ENCODE measurements at regions of chr3 and their contacts with region 1.

Region 1: GRCh38 chr3:112013058-112013783 is 14.5 kb downstream of the TAGLN3 start:
- DNase-seq: peak; percentile 74
- ATAC-seq: peak; percentile 92
- H3K4me3 ChIP-seq: no peak overlapping the region
- H3K27ac ChIP-seq: peak overlapping the region; percentile 1; the same call in 1 of the 2 replicates
- H3K4me1 ChIP-seq: peaks cover 0 to 14% of the 10 kb centered on the region in 2 experiments; a peak in 2 of 4 replicates
- H3K27me3 ChIP-seq: no peaks in the 10 kb centered on the region
- CTCF ChIP-seq: peak; percentile 79 to 90 (median 89)
- POLR2A ChIP-seq: no peak
- RAD21 ChIP-seq: peak; percentile 93

Region 2: DNA sequence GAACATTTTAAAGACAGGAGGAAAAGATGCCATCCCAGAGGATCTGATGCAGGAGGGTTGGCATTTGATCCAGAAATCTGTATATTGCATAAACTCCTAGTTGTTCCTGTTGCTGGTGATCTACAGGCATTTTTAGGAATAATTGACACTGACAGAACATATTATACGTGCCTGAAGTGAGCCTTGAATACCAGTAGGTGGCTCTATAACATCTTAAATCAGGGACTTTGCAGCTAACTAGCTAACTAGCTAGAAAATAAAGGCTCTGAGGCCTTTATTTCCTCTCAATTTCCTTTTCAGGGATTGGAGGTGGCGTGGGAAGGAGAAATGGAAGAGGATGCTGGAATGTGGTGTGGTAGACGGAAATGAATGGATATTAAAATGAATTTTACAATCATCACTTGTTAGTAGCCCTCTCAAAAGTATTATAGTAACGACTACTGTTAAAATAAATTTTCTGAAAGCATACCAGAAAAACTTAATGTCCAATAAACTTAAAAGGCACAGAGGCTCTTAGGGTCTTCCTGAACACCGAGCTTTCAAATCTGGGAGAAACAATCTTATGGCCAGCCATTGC is 344.2 kb before region 1 on chr3:
- CTCF ChIA-PET with region 1: interaction called, 10 read pairs
- POLR2A ChIA-PET with region 1: no interaction called
- RAD21 ChIA-PET with region 1: interaction called in 1 of 2 experiments, 5 read pairs
- intact Hi-C with region 1: no loop called
- DNase-seq: peak; percentile 47
- ATAC-seq: peak; percentile 88
- H3K4me3 ChIP-seq: no peak overlapping the region
- H3K27ac ChIP-seq: no peak overlapping the region
- H3K4me1 ChIP-seq: peaks cover 14 to 46% of the 10 kb centered on the region in 2 experiments; a peak in 3 of 4 replicates
- H3K27me3 ChIP-seq: no peaks in the 10 kb centered on the region
- CTCF ChIP-seq: peak; percentile 57 to 89 (median 81)
- POLR2A ChIP-seq: no peak
- RAD21 ChIP-seq: peak; percentile 92

Region 3: GRCh38 chr3:111751961-111752360 is 261.3 kb before region 1 on chr3:
- CTCF ChIA-PET with region 1: no interaction called
- POLR2A ChIA-PET with region 1: no interaction called
- RAD21 ChIA-PET with region 1: no interaction called
- intact Hi-C with region 1: no loop called
- DNase-seq: no peak
- ATAC-seq: no peak
- H3K4me3 ChIP-seq: no peak overlapping the region
- H3K27ac ChIP-seq: no peak overlapping the region
- H3K4me1 ChIP-seq: peaks cover 10 to 36% of the 10 kb centered on the region in 2 experiments
- H3K27me3 ChIP-seq: no peaks in the 10 kb centered on the region
- CTCF ChIP-seq: no peak
- POLR2A ChIP-seq: no peak
- RAD21 ChIP-seq: no peak

Region 4: GRCh38 chr3:111781561-111782446 is 231.4 kb before region 1 on chr3:
- CTCF ChIA-PET with region 1: no interaction called
- POLR2A ChIA-PET with region 1: no interaction called
- RAD21 ChIA-PET with region 1: no interaction called
- intact Hi-C with region 1: no loop called
- DNase-seq: no peak
- ATAC-seq: no peak
- H3K4me3 ChIP-seq: no peak overlapping the region
- H3K27ac ChIP-seq: no peak overlapping the region
- H3K4me1 ChIP-seq: no peaks in the 10 kb centered on the region
- H3K27me3 ChIP-seq: no peaks in the 10 kb centered on the region
- CTCF ChIP-seq: no peak
- POLR2A ChIP-seq: no peak
- RAD21 ChIP-seq: no peak

Region 5: GRCh38 chr3:111895079-111895478 is 118.1 kb before region 1 on chr3:
- CTCF ChIA-PET with region 1: interaction called, 30 read pairs
- POLR2A ChIA-PET with region 1: no interaction called
- RAD21 ChIA-PET with region 1: interaction called, 9 to 10 read pairs
- intact Hi-C with region 1: no loop called
- DNase-seq: peak; percentile 75
- ATAC-seq: peak; percentile 82
- H3K4me3 ChIP-seq: no peak overlapping the region
- H3K27ac ChIP-seq: peak overlapping the region; percentile 58
- H3K4me1 ChIP-seq: peaks cover 23 to 73% of the 10 kb centered on the region in 2 experiments; a peak in 3 of 4 replicates
- H3K27me3 ChIP-seq: no peaks in the 10 kb centered on the region
- CTCF ChIP-seq: peak in 2 of 3 experiments; percentile 64 to 81; a peak in 4 of 6 replicates
- POLR2A ChIP-seq: no peak
- RAD21 ChIP-seq: no peak

Region 6: DNA sequence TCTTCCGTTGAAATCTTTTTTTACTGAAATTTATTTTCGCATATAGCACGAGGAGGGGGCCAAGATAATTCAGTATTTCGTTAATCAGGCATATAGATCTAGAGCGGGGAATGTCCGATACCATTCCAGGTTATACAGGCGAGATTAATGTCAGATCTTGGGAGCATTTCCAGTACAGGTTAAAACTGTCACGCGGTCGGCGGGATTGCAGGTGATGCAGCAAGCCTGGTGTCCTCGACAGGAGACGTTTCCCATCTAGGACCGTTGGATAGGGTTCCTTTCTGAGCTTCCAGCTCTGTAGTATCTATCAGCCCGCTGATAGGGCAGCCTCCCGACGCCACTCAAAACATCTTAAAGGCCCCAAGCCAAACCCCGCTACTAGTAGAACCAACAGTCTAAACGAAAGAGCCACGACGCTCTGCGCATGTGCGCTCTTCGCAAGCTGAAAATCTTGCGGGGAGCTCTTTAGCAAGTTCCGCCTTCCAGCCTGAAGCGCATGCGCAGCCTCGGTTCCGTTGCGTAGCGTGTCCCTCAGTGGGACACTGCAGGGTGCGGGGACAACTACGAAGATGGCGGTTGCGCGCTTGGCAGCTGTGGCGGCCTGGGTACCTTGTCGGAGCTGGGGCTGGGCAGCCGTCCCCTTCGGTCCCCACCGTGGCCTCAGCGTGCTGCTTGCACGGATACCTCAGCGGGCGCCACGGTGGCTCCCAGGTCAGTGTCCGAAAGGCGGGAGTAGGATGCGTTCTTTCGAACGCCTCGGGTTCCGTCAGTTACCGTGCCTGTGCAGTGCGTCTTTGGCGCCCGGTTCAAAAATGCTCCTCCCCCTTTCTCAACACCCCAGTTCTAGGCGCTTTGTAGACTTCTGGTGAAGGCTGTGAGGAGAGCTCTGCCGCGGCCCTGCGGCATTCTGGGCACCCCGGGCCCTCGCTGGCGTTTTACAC is 34.5 kb before region 1 on chr3 and contains the start of gene ABHD10:
- CTCF ChIA-PET with region 1: interaction called, 32 read pairs
- POLR2A ChIA-PET with region 1: interaction called, 31 read pairs
- RAD21 ChIA-PET with region 1: interaction called in 1 of 2 experiments, 6 read pairs
- intact Hi-C with region 1: no loop called
- DNase-seq: peak; percentile 100
- ATAC-seq: peak; percentile 94
- H3K4me3 ChIP-seq: peak within 1 kb of the TSS; percentile 77 to 78
- H3K27ac ChIP-seq: peak within 1 kb of the TSS; percentile 90
- H3K4me1 ChIP-seq: peaks cover 25 to 33% of the 10 kb centered on the region in 2 experiments
- H3K27me3 ChIP-seq: no peaks in the 10 kb centered on the region
- CTCF ChIP-seq: no peak
- POLR2A ChIP-seq: peak; percentile 89
- RAD21 ChIP-seq: no peak
- total RNA-seq, gene ABHD10: 295 TPM

Region 7: DNA sequence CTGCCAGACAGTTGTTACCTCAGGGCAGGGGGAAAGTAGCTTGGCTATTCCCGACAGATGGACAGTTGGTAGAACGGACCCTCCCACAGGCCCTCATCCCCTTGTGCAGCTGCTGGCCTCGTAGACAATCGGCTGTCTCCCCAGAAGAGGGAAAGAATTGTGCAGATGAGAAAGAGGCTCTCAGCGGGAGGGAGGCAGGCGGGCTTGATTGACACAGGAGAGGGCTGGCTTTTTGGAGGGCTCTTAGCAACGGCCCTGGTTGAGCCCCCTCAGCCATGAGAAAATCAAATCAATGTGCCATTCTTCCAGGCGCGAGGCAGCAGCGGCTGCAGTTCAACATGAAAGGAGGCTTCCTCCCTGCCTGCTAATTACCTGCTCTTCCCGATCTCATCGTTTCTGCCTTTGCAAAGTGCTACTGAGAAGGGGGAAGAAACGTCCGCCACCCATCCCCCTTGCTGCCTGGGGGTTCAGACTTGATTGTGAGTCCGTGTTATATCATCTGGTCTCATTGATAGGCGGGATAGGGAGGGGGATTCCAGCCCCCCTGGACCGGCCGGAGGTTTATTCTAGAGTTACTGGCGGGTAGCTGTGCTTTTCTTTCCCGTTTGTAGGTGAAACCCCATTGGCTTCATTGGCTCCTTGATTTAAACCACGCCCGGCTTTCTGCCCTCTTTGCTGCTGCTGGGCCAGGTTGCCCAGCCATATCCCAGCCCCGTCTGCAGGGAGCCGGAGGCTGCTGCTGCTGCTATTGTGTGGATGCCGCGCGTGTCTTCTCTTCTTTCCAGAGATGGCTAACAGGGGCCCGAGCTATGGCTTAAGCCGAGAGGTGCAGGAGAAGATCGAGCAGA is 14.4 kb before region 1 on chr3 and contains the start of gene TAGLN3:
- CTCF ChIA-PET with region 1: interaction called, 46 read pairs
- POLR2A ChIA-PET with region 1: interaction called, 5 read pairs
- RAD21 ChIA-PET with region 1: no interaction called
- intact Hi-C with region 1: no loop called
- DNase-seq: no peak
- ATAC-seq: no peak
- H3K4me3 ChIP-seq: no peak within 1 kb of the TSS
- H3K27ac ChIP-seq: no peak within 1 kb of the TSS
- H3K4me1 ChIP-seq: peaks cover 2 to 24% of the 10 kb centered on the region in 2 experiments; a peak in 3 of 4 replicates
- H3K27me3 ChIP-seq: no peaks in the 10 kb centered on the region
- CTCF ChIP-seq: no peak
- POLR2A ChIP-seq: no peak
- RAD21 ChIP-seq: no peak
- total RNA-seq, gene TAGLN3: 0.64 TPM

Region 8: GRCh38 chr3:112043603-112044201 is 30.5 kb after region 1 on chr3:
- CTCF ChIA-PET with region 1: interaction called, 21 read pairs
- POLR2A ChIA-PET with region 1: interaction called, 4 read pairs
- RAD21 ChIA-PET with region 1: interaction called, 3 to 6 read pairs
- intact Hi-C with region 1: no loop called
- DNase-seq: peak; percentile 75
- ATAC-seq: peak; percentile 97
- H3K4me3 ChIP-seq: peak overlapping the region; percentile 11 to 40; a peak in 3 of 4 replicates
- H3K27ac ChIP-seq: no peak overlapping the region; the same call in 1 of the 2 replicates
- H3K4me1 ChIP-seq: peaks cover 0 to 26% of the 10 kb centered on the region in 2 experiments; a peak in 2 of 4 replicates
- H3K27me3 ChIP-seq: no peaks in the 10 kb centered on the region
- CTCF ChIP-seq: peak; percentile 87 to 99 (median 96)
- POLR2A ChIP-seq: no peak
- RAD21 ChIP-seq: peak; percentile 91

Region 9: DNA sequence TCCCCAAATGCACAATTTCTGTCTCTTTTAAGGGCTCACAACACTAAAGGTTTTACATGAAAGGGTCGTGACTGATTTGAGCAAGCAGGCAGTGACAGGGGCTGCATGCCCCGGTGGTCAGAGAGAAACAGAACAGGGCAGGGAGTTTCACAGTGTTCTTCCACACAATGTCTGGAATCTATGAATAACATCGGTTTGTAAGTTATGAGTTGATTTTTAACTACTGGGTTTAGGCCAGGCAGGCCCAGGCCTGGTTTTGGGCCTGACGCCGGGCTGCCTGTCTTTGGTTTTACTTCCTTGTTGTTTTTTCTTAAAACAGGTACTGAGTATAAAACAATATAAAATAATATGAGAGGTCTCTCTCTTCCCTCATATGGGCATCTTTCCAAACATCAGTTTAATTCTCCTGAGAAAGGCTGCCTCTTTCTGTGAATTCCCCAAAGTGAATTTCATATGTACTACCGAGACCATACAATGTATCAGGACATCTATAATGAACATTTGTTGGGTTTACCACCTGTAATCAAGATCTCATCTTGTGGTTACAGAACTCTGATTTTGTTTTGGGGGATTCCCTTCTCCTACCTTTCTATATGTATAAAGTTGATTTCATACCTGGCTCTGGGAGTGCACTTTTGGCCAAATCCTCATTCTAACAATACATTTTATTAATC is 394.1 kb after region 1 on chr3:
- CTCF ChIA-PET with region 1: no interaction called
- POLR2A ChIA-PET with region 1: no interaction called
- RAD21 ChIA-PET with region 1: no interaction called
- intact Hi-C with region 1: no loop called
- DNase-seq: no peak
- ATAC-seq: no peak
- H3K4me3 ChIP-seq: no peak overlapping the region
- H3K27ac ChIP-seq: no peak overlapping the region
- H3K4me1 ChIP-seq: no peaks in the 10 kb centered on the region
- H3K27me3 ChIP-seq: no peaks in the 10 kb centered on the region
- CTCF ChIP-seq: no peak
- POLR2A ChIP-seq: no peak
- RAD21 ChIP-seq: no peak

Measured in HCT116 (cell line).